PC-3 (cell line): ENCODE measurements at regions of chr1 and their contacts with region 1.

Region 1: DNA sequence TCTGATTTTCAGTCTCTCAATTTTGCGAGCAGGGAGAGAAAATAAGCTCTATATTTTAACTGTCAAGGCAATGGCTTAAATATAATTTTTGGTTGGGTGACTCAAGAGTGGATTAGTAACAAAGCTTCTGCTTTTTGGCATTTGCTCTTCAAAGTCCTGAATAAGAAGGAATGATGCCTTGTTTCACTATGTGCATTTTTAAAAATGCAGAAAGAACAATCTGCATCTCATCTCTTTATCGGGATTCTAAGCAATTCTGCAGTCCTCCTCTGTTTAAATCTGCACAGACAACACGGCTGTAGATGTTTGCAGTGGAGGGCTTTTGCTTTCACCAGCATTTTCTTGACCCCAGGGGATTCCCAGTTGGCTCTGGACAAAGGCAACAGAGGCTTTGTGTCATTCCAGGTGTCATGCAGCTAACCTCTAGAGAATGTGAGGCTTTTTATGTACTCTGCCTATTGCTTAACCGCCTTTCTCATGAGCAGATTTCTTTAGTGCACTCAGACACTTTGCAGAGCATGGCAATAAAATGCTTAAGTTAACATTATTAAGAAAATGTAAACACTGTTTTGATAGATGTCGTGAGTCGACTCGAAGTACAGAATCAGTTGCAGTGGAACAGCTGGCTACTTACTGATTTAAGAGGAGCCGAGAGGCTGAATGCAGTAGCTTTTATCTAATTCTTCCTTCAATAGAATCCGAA is 783.2 kb upstream of the NEGR1 start:
- DNase-seq: peak; percentile 45
- ATAC-seq: peak; percentile 97
- H3K4me3 ChIP-seq: no peak overlapping the region
- H3K27ac ChIP-seq: no peak overlapping the region
- H3K4me1 ChIP-seq: 0 out of 2 replicates have a peak, but pooled peaks cover 5% of the 10 kb centered on the region
- H3K27me3 ChIP-seq: no peaks in the 10 kb centered on the region
- CTCF ChIP-seq: no peak

Region 2: DNA sequence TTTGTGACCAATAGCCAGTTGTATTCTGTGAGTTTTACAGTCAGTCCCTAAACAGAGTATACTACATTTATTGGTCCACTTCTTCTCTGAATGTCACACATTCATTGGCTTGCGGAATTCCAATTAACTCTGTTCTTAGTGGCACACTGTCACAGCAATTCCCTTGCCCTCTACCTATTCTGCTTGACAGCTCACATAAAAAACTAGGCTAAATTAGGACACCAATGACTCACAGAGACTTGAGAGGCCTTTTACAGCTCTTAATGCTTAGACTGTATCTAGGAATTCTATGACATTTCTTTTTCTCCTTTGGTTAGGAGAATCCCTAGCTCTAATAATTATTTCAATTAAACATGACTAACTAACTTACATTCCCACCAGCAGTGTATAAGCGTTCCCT is 887.2 kb before region 1 on chr1:
- CTCF ChIA-PET with region 1: no interaction called
- POLR2A ChIA-PET with region 1: no interaction called
- intact Hi-C with region 1: loop called (anchors 10 kb)
- DNase-seq: peak; percentile 20
- ATAC-seq: peak; percentile 85
- H3K4me3 ChIP-seq: no peak overlapping the region
- H3K27ac ChIP-seq: no peak overlapping the region
- H3K4me1 ChIP-seq: no peaks in the 10 kb centered on the region
- H3K27me3 ChIP-seq: no peaks in the 10 kb centered on the region
- CTCF ChIP-seq: no peak